Activated CD8-positive, alpha-beta T cell treated with anti-CD3 and anti-CD28 coated beads for 36 hours (primary cell): ENCODE measurements at regions of chr15 and their contacts with region 1.

Region 1: DNA sequence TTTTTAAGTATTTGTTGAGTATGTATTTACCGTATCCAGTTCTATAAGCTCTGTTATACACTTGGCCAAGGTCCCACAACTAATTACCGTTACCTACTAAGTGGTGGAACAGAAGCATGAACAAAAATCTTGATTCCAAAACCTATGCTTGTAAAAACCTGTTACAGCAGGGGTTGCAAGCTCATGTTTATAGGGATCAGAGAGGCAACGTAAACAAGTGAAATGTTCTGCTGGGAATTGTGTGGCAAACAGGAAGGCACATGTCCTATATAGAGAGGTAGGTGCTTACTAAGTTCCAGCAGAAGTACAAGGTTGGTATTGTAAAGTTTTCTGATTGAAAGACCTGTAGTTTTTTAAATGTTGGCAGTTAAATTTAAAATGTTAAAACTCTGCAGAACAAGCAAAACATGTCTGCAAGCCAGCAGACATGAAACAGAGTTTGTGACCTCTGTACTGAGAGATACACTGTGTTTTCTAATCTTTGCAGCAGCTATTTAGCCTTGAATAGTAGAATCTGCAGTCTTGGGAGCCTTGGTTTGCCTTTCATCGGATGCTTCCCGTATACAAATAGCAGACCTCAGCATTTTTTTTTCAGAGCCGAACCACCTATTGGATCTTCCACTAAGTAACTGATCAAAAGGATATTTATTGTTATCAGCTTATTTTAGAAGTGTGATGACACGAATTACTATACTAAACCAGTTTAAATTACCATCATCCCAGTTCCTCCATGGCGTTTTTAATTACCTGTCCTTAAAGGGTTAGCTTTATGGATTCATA is 11.4 kb downstream of the IREB2 start:
- DNase-seq: no peak
- ATAC-seq: no peak
- H3K4me3 Mint-ChIP-seq: no peak overlapping the region
- H3K27ac Mint-ChIP-seq: no peak overlapping the region
- H3K4me1 Mint-ChIP-seq: peaks cover 57% of the 10 kb centered on the region
- H3K27me3 Mint-ChIP-seq: no peaks in the 10 kb centered on the region
- CTCF ChIP-seq: no peak

Region 2: GRCh38 chr15:78422571-78423340 is 26.7 kb before region 1 on chr15:
- CTCF ChIA-PET with region 1: interaction called, 10 read pairs
- POLR2A ChIA-PET with region 1: interaction called, 4 read pairs
- intact Hi-C with region 1: no loop called
- DNase-seq: peak; percentile 78
- ATAC-seq: peak; percentile 94
- H3K4me3 Mint-ChIP-seq: no peak overlapping the region
- H3K27ac Mint-ChIP-seq: no peak overlapping the region
- H3K4me1 Mint-ChIP-seq: peaks cover 17% of the 10 kb centered on the region
- H3K27me3 Mint-ChIP-seq: peaks cover 8% of the 10 kb centered on the region
- CTCF ChIP-seq: peak; percentile 91